ENCODE measurements at regions of chr15 and their contacts with region 1.

Region 1: GRCh38 chr15:88638626-88639372 is at the start of gene ISG20:
- DNase-seq: peak; percentile 95 to 96
- H3K4me3 ChIP-seq: peak within 1 kb of the TSS; percentile 24
- H3K4me3 Mint-ChIP-seq: peak within 1 kb of the TSS; percentile 83
- H3K27ac Mint-ChIP-seq: peak within 1 kb of the TSS; percentile 95
- H3K4me1 ChIP-seq: peaks cover 33% of the 10 kb centered on the region
- H3K4me1 Mint-ChIP-seq: peaks cover 31% of the 10 kb centered on the region
- H3K27me3 ChIP-seq: no peaks in the 10 kb centered on the region
- H3K27me3 Mint-ChIP-seq: no peaks in the 10 kb centered on the region
- CTCF ChIP-seq: peak in 1 of 2 experiments; percentile 34
- total RNA-seq, gene ISG20: 6.4 and 7.7 TPM in 2 replicates

Region 2: GRCh38 chr15:88467073-88467934 is 171.5 kb before region 1 on chr15 and contains the starts of genes MRPL46 and MRPS11:
- CTCF ChIA-PET with region 1: interaction called, 7 read pairs
- POLR2A ChIA-PET with region 1: interaction called, 14 read pairs
- intact Hi-C with region 1: no loop called
- DNase-seq: peak; percentile 87 to 90
- H3K4me3 ChIP-seq: peak within 1 kb of the TSS; percentile 90
- H3K4me3 Mint-ChIP-seq: peak within 1 kb of the TSS; percentile 96
- H3K27ac Mint-ChIP-seq: peak within 1 kb of the TSS; percentile 98
- H3K4me1 ChIP-seq: peaks cover 6% of the 10 kb centered on the region
- H3K4me1 Mint-ChIP-seq: peaks cover 6% of the 10 kb centered on the region
- H3K27me3 ChIP-seq: no peaks in the 10 kb centered on the region
- H3K27me3 Mint-ChIP-seq: no peaks in the 10 kb centered on the region
- CTCF ChIP-seq: no peak
- total RNA-seq, gene MRPL46: 44.5 and 46.5 TPM in 2 replicates
- total RNA-seq, gene MRPS11: 48.4 and 50.2 TPM in 2 replicates

Region 3: GRCh38 chr15:88620995-88621772 is 17.6 kb before region 1 on chr15 and contains the start of gene AEN:
- CTCF ChIA-PET with region 1: interaction called, 26 read pairs
- POLR2A ChIA-PET with region 1: interaction called, 14 read pairs
- intact Hi-C with region 1: loop called (anchors 1 kb)
- DNase-seq: peak; percentile 95 to 97
- H3K4me3 ChIP-seq: peak within 1 kb of the TSS; percentile 92
- H3K4me3 Mint-ChIP-seq: peak within 1 kb of the TSS; percentile 91
- H3K27ac Mint-ChIP-seq: peak within 1 kb of the TSS; percentile 89
- H3K4me1 ChIP-seq: peaks cover 7% of the 10 kb centered on the region; the same call in 1 of the 2 replicates
- H3K4me1 Mint-ChIP-seq: peaks cover 24% of the 10 kb centered on the region
- H3K27me3 ChIP-seq: no peaks in the 10 kb centered on the region
- H3K27me3 Mint-ChIP-seq: no peaks in the 10 kb centered on the region
- CTCF ChIP-seq: peak in 1 of 2 experiments; percentile 7
- total RNA-seq, gene AEN: 28.7 and 33.2 TPM in 2 replicates